Activated CD4-positive, alpha-beta memory T cell treated with anti-CD3 and anti-CD28 coated beads, Interleukin-2, amount 10 ng/mL, durations not matched to agents 7 days and 5 days (primary cell): ENCODE measurements at regions of chr6 and their contacts with region 1.

Region 1: GRCh38 chr6:116126032-116126431 is at the start of gene COL10A1:
- DNase-seq: no peak
- H3K4me3 Mint-ChIP-seq: no peak within 1 kb of the TSS
- H3K27ac Mint-ChIP-seq: no peak within 1 kb of the TSS
- H3K4me1 Mint-ChIP-seq: peaks cover 6% of the 10 kb centered on the region
- H3K27me3 Mint-ChIP-seq: no peaks in the 10 kb centered on the region
- total RNA-seq, gene COL10A1: not detected

Region 2: DNA sequence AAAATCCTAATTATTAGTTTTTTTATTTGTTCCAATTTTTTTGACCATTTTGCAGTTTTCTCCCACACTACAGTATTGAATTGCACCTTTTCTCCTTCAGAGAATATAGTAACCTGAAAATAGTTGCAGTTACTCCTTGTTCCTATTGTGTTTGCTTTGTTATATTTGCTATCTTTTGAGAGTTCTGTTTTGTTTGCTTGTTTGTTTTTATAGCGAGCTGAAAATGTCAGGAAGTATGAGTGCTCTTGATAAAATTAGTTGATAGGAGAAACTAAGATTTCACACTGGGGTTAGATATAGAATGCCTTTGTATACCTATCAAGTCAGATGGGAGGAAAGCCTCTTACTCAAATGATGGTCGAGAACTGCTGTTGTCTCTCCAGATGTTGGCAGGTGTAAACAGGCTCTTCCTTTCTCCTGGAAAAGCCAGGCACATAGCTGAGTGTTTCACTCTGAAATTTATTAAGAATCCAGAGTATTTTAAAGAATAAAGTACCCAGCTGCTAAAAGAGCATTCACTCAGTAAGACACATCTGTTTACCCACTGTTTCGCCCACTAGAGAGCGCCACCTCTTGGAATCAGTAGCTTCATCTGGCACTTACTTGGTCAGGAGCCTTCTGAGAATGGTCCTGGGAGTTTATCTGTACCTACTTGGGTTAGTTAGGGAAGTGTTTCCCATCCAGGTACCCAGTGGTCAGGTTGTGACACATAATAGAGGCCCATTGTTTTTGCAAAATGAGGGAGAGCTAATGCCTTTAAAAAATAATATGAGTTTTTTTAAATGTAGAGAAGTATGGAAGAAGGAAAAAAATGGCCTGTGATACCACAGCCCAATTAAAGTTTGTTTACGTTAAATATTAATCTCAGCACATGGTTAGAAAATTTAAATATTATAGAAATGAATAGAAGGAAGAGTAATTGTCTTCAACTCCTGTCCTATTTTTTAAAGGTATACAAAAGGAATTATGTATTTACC is 14.2 kb before region 1 on chr6:
- CTCF ChIA-PET with region 1: interaction called, 11 read pairs
- POLR2A ChIA-PET with region 1: no interaction called
- DNase-seq: peak; percentile 47
- H3K4me3 Mint-ChIP-seq: no peak overlapping the region
- H3K27ac Mint-ChIP-seq: no peak overlapping the region
- H3K4me1 Mint-ChIP-seq: no peaks in the 10 kb centered on the region
- H3K27me3 Mint-ChIP-seq: no peaks in the 10 kb centered on the region